Heart left ventricle (tissue), 16 donors: ENCODE measurements at regions of chr16 and their contacts with region 1.

Region 1: GRCh38 chr16:74700438-74701225 is at the start of gene MLKL:
- DNase-seq: peak; percentile 47 to 83 (median 74)
- ATAC-seq: peak; percentile 70 to 91 (median 83)
- H3K4me3 ChIP-seq: peak within 1 kb of the TSS; percentile 49 to 95 (median 84)
- H3K27ac ChIP-seq: peak within 1 kb of the TSS; percentile 73 to 99 (median 87)
- H3K4me1 ChIP-seq: peaks cover 0 to 56% (median 7%) of the 10 kb centered on the region in 12 donors
- H3K27me3 ChIP-seq: no peaks in the 10 kb centered on the region
- CTCF ChIP-seq: no peak
- POLR2A ChIP-seq: no peak
- total RNA-seq, gene MLKL: 2.2 to 14.9 (median 4.3) TPM

Region 2: DNA sequence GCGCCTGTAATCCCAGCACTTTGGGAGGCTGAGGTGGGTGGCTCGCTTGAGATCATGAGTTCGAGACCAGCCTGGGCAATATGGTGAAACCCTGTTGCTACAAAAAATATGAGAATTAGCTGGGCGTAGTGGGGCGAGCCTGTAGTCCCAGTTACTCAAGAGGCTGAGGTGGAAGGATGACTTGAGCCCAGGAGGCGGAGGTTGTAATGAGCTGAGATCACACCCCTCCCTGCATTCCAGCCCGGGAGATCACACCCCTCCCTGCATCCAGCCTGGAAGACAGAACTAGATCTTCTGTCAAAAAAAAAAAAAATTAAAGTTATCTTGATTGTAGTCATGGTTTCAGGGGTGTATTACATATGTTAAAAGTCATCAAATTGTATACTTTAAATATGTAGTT is 66.9 kb before region 1 on chr16:
- intact Hi-C with region 1: no loop called
- DNase-seq: no peak
- ATAC-seq: no peak
- H3K4me3 ChIP-seq: no peak overlapping the region
- H3K27ac ChIP-seq: no peak overlapping the region
- H3K4me1 ChIP-seq: no peaks in the 10 kb centered on the region
- H3K27me3 ChIP-seq: no peaks in the 10 kb centered on the region
- CTCF ChIP-seq: no peak
- POLR2A ChIP-seq: no peak

Region 3: DNA sequence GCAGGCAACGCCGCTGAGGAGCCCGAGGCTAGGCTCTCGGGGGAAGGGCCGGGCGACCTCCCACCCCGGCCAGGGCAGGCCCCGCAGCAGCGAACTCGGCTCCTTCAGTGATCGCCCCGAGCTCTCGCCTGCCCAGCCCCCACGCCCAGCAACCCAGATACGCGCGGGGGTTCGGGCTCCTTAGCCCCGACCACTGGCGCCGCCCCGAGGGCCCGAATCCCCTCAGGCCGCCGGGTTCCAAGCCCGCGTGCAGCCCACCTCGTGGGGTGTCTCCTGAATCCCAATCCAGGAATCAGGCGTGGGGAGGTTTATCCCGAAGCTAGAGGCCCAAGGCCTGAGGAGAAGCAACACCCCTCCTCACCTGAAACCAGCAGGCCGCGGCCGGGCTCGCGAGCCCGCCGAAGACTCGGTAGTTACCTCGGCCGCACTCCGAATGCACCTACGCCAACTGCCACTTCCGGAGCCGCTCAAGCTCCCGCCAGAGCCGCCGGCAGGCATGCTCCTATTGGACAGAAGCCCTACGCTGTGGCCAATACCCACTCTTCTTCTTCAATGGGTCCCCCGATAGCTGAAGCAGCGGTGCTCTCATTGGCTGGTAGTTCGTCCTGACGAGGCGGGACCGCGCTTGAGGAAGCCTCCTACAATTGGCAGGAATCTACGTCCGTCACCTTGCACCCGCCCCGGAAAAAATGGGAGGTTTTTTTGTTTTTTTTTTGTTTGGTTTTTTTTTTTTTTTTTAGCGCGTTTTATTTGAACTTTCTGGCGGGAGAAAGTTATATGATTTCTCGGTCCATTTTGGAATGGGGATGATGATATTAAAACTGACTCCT is 34.0 kb before region 1 on chr16 and contains the start of gene RFWD3:
- intact Hi-C with region 1: loop called in 1 of 10 experiments (anchors 2 kb)
- DNase-seq: peak; percentile 96 to 98 (median 98)
- ATAC-seq: peak; percentile 100
- H3K4me3 ChIP-seq: peak within 1 kb of the TSS; percentile 61 to 99 (median 81)
- H3K27ac ChIP-seq: peak within 1 kb of the TSS in 11 of 12 donors; percentile 11 to 78 (median 71)
- H3K4me1 ChIP-seq: peaks cover 0 to 20% (median 8%) of the 10 kb centered on the region in 12 donors
- H3K27me3 ChIP-seq: no peaks in the 10 kb centered on the region
- CTCF ChIP-seq: no peak
- POLR2A ChIP-seq: no peak
- total RNA-seq, gene RFWD3: 3.9 to 14.4 (median 5.3) TPM